ENCODE measurements at regions of chr3 and their contacts with region 1.

Region 1: DNA sequence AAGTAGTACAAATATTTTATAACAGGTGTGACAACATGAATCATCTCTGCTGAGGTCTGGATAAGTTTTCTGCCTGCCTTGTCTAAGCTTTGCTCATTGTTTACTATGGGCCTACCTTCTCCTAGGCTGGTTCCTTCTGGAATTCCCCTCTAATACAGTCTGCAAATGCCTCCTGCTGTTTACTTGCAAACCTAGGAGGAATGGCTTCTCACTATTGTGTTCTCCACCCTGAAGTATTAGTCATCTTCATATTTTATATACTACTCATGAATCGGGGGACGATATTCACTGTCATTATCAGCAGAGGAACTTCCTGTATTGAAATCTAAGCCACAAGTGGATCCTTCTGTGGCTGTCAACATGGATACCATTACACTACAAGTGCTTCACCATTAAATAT is 154.8 kb downstream of the PLCL2 start:
- DNase-seq: no peak

Region 2: GRCh38 chr3:16828815-16829214 is 210.8 kb before region 1 on chr3:
- intact Hi-C with region 1: no loop called
- DNase-seq: no peak

Region 3: DNA sequence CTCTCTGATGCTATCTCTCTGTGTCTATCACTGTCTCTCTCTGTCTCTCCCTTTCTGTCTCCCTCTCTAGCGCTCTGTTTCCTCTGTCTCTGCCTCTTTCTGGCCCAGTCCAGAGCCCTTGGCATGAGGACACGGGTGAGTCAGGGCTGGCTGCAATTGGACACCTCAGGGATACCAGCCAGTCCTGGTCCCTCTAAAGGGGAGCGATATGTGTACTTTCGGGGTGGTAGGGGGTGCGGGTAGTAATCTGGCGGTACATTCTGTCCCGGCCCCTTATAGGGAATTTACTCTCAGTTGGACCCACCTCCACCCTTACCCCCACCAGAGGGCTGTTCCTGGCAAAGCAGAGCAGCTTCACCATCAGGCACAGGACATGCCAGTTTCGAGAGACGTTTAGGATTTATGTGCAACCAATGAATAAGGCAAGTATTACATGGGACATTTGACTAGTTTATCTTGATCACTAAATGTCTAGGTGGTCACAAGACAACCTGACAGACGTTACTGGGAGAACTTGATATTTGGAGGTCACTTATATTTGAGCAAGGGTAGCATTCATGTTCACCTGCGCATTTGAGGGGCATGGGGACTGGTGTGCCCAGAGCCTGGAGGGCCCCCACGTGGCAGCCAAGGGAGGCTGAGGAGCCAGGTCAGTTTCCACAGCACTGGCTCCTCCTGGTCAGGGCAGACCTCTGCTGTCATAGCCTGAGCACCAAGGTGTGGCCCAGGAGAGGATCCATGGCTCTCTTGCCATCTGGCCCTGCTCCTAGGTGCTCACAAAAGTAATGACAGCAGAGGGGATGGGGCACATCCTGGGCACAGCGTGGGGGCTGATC is 101.3 kb after region 1 on chr3:
- intact Hi-C with region 1: loop called (anchors 5 kb)
- DNase-seq: no peak

Measured in cardiac septum (tissue), 1 donor.